ENCODE measurements at regions of chr18 and their contacts with region 1.

Region 1: DNA sequence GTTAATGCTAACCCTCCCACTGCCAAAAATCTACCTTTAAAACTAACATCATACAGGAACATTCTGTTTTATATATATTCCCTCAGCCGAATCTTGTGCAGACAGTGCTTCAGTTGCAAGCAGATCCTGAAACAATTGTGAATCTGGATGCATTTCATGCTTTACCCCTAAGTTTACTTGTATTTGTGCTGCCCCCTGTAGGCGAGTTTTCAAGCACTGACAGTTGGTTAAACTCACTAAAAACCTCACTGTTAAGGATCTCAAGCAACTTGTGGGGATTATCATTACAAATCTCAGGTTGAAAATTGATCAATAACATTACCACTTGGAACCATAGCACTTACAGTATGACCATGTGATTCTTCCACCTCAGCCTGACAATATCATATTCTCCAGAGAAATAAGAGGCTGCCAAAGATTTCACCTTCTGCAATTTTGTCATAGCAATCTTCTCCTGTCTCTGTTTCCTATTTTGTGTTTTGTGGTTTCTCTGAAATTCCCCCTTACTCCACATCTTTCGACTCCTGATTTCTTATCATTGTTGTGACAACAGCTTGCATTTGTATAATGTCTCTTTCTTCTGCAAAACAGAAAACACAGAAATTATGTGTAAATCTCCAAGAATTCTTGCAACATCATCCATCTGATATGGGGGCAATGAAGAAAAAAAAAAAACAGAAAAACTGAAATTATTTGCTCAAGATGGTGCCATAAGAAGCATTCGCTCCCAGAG is 354.6 kb upstream of the SETBP1 start:
- DNase-seq: peak; percentile 72
- H3K4me3 ChIP-seq: no peak overlapping the region
- H3K27ac ChIP-seq: no peak overlapping the region
- H3K4me1 ChIP-seq: no peaks in the 10 kb centered on the region
- H3K27me3 ChIP-seq: no peaks in the 10 kb centered on the region
- CTCF ChIP-seq: peak; percentile 54 to 64
- POLR2A ChIP-seq: no peak

Region 2: DNA sequence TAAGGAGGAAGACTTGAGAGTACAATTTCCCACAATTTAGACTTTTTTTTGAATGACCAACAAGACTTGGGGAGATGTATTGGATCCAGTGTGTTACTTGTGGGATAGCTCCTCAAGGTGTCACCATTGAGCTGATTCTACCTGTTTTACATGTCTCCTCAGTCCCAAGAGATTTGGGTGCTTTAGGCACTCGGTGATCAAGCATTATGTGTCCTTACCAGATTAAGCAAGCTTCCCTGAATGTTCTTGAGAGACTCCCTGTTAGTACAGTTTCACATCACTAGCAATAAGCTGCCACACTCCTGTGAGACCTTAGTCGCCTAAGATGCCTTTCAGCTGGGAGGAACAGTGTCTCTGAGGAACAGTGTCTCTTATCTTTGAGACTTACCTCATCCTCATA is 664.5 kb before region 1 on chr18:
- CTCF ChIA-PET with region 1: interaction called, 7 read pairs
- POLR2A ChIA-PET with region 1: no interaction called
- dilution Hi-C with region 1: no loop called
- intact Hi-C with region 1: loop called (anchors 1 kb)
- DNase-seq: peak; percentile 44
- H3K4me3 ChIP-seq: no peak overlapping the region
- H3K27ac ChIP-seq: no peak overlapping the region
- H3K4me1 ChIP-seq: no peaks in the 10 kb centered on the region
- H3K27me3 ChIP-seq: no peaks in the 10 kb centered on the region
- CTCF ChIP-seq: peak; percentile 13 to 29
- POLR2A ChIP-seq: no peak

Region 3: DNA sequence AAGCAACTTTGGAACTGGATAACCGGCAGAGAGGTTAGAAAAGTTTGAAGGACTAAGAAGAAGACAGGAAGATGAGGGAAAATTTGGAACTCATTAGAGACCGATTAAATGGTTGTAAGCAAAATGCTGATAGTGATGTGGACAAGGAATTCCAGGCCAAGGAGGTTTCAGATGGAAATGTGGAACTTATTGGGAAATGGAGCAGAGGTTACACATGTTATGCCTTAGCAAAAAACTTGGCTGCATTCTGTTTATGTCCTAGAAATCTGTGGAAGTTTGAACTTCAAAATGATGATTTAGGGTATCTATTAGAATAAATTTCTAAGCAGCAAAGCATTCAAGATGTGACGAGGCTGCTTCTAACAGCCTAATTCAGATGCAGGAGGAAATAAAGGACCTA is 373.7 kb before region 1 on chr18:
- CTCF ChIA-PET with region 1: no interaction called
- POLR2A ChIA-PET with region 1: no interaction called
- dilution Hi-C with region 1: no loop called
- intact Hi-C with region 1: no loop called
- DNase-seq: no peak
- H3K4me3 ChIP-seq: no peak overlapping the region
- H3K27ac ChIP-seq: no peak overlapping the region
- H3K4me1 ChIP-seq: no peaks in the 10 kb centered on the region
- H3K27me3 ChIP-seq: no peaks in the 10 kb centered on the region
- CTCF ChIP-seq: no peak
- POLR2A ChIP-seq: no peak

Region 4: DNA sequence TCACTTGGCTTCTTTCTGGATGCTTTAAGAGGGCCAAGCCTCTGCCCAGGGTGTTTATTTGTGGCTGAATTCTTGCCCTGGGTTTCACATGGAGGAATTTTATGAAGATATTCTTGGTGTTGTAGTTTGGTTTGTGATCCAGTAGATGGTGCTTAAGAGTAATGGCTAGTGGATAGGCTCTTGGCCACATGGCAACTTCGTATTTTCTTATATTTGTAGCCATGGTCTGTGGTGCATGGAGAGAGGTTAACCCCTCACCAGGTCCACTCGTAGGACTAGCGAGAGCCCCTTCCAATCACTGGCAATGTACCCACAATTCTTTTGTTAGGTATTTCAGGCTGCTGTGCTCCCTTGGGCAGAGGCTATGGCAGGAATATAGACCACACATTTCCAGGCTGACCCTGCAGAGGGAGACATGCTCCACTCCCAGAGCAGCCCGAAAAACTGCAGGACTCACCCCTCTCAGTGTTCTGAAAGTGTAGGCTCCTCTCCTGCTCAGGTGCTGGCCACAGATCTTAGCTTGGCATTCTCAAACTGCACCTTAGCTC is 227.4 kb before region 1 on chr18:
- CTCF ChIA-PET with region 1: interaction called, 6 read pairs
- POLR2A ChIA-PET with region 1: no interaction called
- dilution Hi-C with region 1: no loop called
- intact Hi-C with region 1: loop called (anchors 2 kb)
- DNase-seq: peak; percentile 53
- H3K4me3 ChIP-seq: no peak overlapping the region
- H3K27ac ChIP-seq: no peak overlapping the region
- H3K4me1 ChIP-seq: no peaks in the 10 kb centered on the region
- H3K27me3 ChIP-seq: peaks cover 0 to 3% of the 10 kb centered on the region in 2 experiments
- CTCF ChIP-seq: peak; percentile 23 to 33
- POLR2A ChIP-seq: no peak

Region 5: DNA sequence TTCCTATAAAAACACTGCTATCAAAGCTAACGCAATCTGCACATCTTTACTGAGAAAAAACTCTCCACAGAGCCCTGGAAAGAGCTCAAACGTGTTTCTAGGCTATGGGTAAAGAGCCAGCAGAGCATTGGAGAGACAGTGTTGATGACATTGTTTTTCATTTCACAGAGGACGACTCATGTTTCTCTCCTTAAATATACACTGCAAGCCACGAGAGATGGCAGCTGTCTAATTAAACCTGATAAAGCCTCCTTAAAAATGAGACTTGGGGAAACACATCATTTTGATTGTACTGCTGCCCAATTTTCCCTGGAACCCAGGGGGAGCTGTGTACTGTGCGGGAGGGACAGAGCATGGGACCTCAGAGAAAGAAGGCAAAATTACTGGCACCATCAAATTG is 60.3 kb after region 1 on chr18:
- CTCF ChIA-PET with region 1: no interaction called
- POLR2A ChIA-PET with region 1: no interaction called
- dilution Hi-C with region 1: no loop called
- intact Hi-C with region 1: no loop called
- DNase-seq: no peak
- H3K4me3 ChIP-seq: no peak overlapping the region
- H3K27ac ChIP-seq: no peak overlapping the region
- H3K4me1 ChIP-seq: no peaks in the 10 kb centered on the region
- H3K27me3 ChIP-seq: no peaks in the 10 kb centered on the region
- CTCF ChIP-seq: no peak
- POLR2A ChIP-seq: no peak

Measured in endothelial cell of umbilical vein (primary cell).